Mammary epithelial cell (primary cell): ENCODE measurements at regions of chr2 and their contacts with region 1.

Region 1: GRCh38 chr2:207408086-207408794 is 121.5 kb upstream of the CREB1 start:
- DNase-seq: peak; percentile 88
- H3K4me3 ChIP-seq: no peak overlapping the region
- H3K27ac ChIP-seq: peak overlapping the region; percentile 64
- H3K4me1 ChIP-seq: peaks cover 28% of the 10 kb centered on the region
- H3K27me3 ChIP-seq: no peaks in the 10 kb centered on the region
- CTCF ChIP-seq: no peak

Region 2: GRCh38 chr2:207459990-207460757 is 51.9 kb after region 1 on chr2:
- CTCF ChIA-PET with region 1: no interaction called
- dilution Hi-C with region 1: no loop called
- in situ Hi-C with region 1: no loop called
- intact Hi-C with region 1: loop called (anchors 5 kb)
- DNase-seq: no peak
- H3K4me3 ChIP-seq: no peak overlapping the region
- H3K27ac ChIP-seq: no peak overlapping the region
- H3K4me1 ChIP-seq: no peaks in the 10 kb centered on the region
- H3K27me3 ChIP-seq: no peaks in the 10 kb centered on the region
- CTCF ChIP-seq: no peak